ENCODE measurements at regions of chr6 and their contacts with region 1.

Region 1: DNA sequence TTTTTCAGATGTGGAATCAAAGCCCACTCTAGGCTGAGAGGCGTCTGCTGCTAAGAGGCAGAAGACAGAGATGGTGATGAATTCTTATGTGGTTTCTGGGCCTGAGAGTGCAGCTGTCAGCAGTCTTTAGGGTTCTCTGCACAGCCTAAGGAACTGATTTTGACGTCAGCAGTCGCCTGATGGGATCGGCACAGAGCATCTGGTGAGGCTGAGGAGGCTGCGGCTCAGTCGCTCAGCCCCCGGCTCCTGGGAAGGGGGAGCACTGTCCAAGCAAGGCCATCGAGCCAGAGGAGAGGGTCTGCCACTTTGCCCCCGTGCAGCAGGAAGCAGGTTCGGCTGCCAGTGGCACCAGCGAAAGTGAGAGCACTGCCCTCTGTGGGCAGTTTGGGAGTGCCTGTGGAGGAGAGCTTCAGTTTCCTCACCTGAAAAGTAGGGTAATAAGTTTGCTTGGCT is 92.5 kb downstream of the TCP11 start:
- DNase-seq: peak in 9 of 10 donors; percentile 37 to 95 (median 63)

Region 2: GRCh38 chr6:35014801-35015200 is 33.9 kb before region 1 on chr6:
- intact Hi-C with region 1: loop called (anchors 5 kb)
- DNase-seq: no peak

Measured in posterior cingulate gyrus (tissue), 11 donors.